ENCODE measurements at regions of chr13 and their contacts with region 1.

Region 1: DNA sequence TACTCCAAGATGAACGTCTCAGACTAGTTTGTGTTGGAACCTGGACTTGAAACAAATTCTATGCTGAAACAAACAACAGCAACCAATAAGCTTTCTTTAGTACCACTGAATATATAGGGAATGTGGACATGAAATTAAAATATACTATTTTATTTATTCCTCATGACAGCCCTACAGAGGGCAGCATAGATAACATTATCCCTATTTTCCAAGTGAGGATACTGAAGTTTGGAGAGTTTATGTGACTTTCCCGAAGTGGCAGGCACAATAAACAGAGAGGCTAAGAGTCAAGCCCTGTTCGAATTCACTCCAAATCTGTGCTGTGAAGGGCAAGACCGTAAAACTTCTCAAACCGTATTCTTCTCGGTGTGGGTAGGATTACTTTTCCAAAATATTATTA is 509.9 kb upstream of the GPC6 start:
- DNase-seq: no peak
- ATAC-seq: no peak
- H3K4me3 ChIP-seq: no peak overlapping the region
- H3K27ac ChIP-seq: no peak overlapping the region
- H3K4me1 ChIP-seq: no peaks in the 10 kb centered on the region
- H3K27me3 ChIP-seq: no peaks in the 10 kb centered on the region
- CTCF ChIP-seq: peak in 4 of 12 donors; percentile 22 to 44 (median 31)
- POLR2A ChIP-seq: no peak

Region 2: DNA sequence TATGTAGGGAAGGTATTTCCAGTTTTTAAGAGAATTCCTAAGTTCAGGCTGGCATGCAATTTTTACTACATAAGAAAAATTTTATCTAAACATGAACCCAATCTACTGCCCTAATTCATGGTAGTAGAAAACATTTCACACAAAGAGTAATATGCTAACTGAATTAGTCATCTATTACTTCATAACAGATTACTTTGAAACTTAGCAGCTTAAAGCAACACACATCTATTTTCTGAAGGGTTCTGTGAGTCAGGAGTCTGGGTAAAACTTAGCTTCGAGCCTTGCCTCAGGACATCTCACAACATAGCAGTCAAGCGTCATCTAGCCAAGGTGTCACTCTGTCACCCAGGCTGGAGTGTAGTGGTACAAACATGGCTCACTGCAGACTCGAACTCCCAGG is 1225.3 kb after region 1 on chr13:
- intact Hi-C with region 1: loop called in 1 of 10 experiments (anchors 10 kb)
- DNase-seq: no peak
- ATAC-seq: no peak
- H3K4me3 ChIP-seq: no peak overlapping the region
- H3K27ac ChIP-seq: no peak overlapping the region
- H3K4me1 ChIP-seq: no peaks in the 10 kb centered on the region
- H3K27me3 ChIP-seq: no peaks in the 10 kb centered on the region
- CTCF ChIP-seq: no peak
- POLR2A ChIP-seq: no peak